GM10248 (cell line): ENCODE measurements at regions of chr10 and their contacts with region 1.

Region 1: GRCh38 chr10:74690393-74690792 is 136.0 kb upstream of the KAT6B start:
- DNase-seq: no peak
- CTCF ChIP-seq: no peak

Region 2: DNA sequence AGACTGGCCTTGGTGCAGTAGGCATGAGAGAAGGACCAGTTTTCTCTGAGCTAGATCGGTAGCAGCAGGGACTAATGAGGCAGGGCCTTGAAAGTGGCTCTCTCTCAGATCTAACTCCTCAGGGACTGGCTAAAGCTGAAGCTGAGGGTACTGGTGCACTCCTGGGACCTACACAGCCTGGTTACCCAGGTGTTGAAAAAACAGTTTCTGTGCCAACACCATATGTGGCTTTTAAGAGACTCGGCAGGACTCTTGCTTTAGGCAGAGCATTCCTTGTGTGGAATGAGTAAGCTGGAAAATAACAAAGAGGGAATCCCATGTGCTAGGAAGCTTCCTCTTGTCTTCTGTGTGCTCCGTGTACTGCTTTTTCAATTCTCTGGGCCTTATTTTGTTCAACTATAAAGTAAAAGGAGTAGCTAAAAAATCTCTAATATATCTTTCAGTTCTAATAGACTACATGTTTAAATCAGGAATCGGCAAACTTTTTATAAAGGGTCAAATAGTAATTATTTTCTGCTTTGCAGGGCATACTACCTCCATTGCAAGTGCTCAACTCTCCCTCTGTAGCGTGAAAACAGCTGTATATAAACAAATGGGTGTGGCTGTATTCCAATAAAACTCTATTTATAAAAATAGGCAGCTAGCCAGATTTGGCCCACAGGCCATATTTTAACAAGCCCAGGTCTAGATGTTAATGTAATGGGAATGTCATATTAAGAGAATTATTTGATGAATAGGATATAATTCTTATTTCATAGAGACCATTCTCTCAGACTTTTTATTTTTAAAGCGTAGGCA is 50.1 kb before region 1 on chr10:
- CTCF ChIA-PET with region 1: no interaction called
- POLR2A ChIA-PET with region 1: no interaction called
- DNase-seq: no peak
- CTCF ChIP-seq: no peak

Region 3: DNA sequence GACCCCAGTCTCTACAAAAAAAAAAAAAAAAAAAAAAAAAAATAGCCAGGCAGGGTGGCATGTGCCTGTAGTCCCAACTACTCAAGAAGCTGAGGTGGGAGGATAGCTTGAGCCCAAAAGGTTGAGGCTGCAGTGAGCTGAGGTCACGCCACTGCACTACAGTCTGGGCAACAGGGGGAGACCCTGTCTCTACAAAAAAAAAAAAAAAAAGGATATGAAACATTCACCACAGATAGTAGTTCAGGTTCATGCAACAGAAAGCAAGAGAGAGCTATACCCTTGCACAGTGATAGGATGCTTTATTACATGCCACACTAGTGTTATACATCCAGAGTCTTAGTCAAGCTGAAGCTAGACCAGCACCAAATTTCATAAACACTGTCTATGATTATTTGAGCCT is 12.4 kb before region 1 on chr10:
- CTCF ChIA-PET with region 1: interaction called, 15 read pairs
- POLR2A ChIA-PET with region 1: no interaction called
- DNase-seq: peak; percentile 66
- CTCF ChIP-seq: no peak